Gastrocnemius medialis (tissue), 4 donors: ENCODE measurements at regions of chr9 and their contacts with region 1.

Region 1: GRCh38 chr9:30932226-30932625 is 1452.2 kb upstream of the ACO1 start:
- DNase-seq: no peak
- ATAC-seq: no peak
- H3K4me3 ChIP-seq: no peak overlapping the region
- H3K27ac ChIP-seq: no peak overlapping the region
- H3K4me1 ChIP-seq: no peaks in the 10 kb centered on the region
- H3K27me3 ChIP-seq: no peaks in the 10 kb centered on the region
- CTCF ChIP-seq: no peak
- POLR2A ChIP-seq: no peak

Region 2: GRCh38 chr9:30846651-30847050 is 85.6 kb before region 1 on chr9:
- in situ Hi-C with region 1: loop called in 1 of 4 experiments (anchors 25 kb)
- intact Hi-C with region 1: no loop called
- DNase-seq: no peak
- ATAC-seq: no peak
- H3K4me3 ChIP-seq: no peak overlapping the region
- H3K27ac ChIP-seq: no peak overlapping the region
- H3K4me1 ChIP-seq: no peaks in the 10 kb centered on the region
- H3K27me3 ChIP-seq: no peaks in the 10 kb centered on the region
- CTCF ChIP-seq: no peak
- POLR2A ChIP-seq: no peak